Natural killer cell (primary cell): ENCODE measurements at regions of chr9 and their contacts with region 1.

Region 1: GRCh38 chr9:74645007-74645639 is 148.0 kb downstream of the RORB start:
- DNase-seq: peak in 1 of 2 donors; percentile 12
- ATAC-seq: no peak
- H3K4me3 ChIP-seq: no peak overlapping the region
- H3K4me3 Mint-ChIP-seq: no peak overlapping the region
- H3K27ac ChIP-seq: no peak overlapping the region
- H3K27ac Mint-ChIP-seq: no peak overlapping the region
- H3K4me1 ChIP-seq: no peaks in the 10 kb centered on the region
- H3K4me1 Mint-ChIP-seq: no peaks in the 10 kb centered on the region
- H3K27me3 ChIP-seq: no peaks in the 10 kb centered on the region
- H3K27me3 Mint-ChIP-seq: no peaks in the 10 kb centered on the region
- CTCF ChIP-seq: peak; percentile 30

Region 2: DNA sequence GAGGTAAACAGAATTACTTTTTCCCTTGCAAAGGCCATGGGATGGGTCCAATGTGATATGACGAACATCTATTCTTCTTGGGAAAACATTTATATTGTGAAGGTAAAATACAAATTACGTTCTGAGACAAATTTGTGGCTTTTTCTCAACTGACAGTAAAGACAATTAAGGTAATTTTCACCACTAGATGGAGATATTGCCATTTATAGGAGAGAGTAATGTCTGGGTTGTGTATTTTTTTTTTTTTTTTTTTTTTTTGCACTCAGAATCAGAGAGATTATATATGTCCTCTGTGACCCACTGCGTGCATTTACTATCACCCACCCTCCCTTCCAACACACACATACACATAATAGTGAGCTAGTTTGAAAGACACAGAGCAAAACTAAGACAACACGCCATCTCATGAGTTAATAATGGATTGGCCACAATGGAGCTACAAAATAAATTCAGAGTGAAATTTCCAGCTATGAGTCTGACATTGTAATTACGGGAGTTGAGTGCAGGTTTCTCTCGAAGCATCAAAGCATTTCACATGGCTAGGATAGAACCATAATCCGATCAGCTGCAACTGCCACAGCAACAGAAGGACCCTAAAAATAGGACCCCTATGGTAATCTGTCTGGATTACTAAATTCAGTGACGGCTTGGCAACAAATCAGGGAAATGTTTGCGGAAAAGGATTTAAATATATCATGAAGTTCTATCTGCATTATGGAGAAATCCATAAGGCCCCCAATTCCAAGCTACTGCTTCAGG is 1444.2 kb before region 1 on chr9:
- intact Hi-C with region 1: loop called (anchors 2 kb)
- DNase-seq: peak in 1 of 2 donors; percentile 48
- ATAC-seq: no peak
- H3K4me3 ChIP-seq: no peak overlapping the region
- H3K4me3 Mint-ChIP-seq: no peak overlapping the region
- H3K27ac ChIP-seq: no peak overlapping the region
- H3K27ac Mint-ChIP-seq: no peak overlapping the region
- H3K4me1 ChIP-seq: no peaks in the 10 kb centered on the region
- H3K4me1 Mint-ChIP-seq: no peaks in the 10 kb centered on the region
- H3K27me3 ChIP-seq: no peaks in the 10 kb centered on the region
- H3K27me3 Mint-ChIP-seq: peaks cover 12 to 22% of the 10 kb centered on the region in 2 donors
- CTCF ChIP-seq: peak; percentile 67